SK-N-SH (cell line): ENCODE measurements at regions of chr1 and their contacts with region 1.

Region 1: DNA sequence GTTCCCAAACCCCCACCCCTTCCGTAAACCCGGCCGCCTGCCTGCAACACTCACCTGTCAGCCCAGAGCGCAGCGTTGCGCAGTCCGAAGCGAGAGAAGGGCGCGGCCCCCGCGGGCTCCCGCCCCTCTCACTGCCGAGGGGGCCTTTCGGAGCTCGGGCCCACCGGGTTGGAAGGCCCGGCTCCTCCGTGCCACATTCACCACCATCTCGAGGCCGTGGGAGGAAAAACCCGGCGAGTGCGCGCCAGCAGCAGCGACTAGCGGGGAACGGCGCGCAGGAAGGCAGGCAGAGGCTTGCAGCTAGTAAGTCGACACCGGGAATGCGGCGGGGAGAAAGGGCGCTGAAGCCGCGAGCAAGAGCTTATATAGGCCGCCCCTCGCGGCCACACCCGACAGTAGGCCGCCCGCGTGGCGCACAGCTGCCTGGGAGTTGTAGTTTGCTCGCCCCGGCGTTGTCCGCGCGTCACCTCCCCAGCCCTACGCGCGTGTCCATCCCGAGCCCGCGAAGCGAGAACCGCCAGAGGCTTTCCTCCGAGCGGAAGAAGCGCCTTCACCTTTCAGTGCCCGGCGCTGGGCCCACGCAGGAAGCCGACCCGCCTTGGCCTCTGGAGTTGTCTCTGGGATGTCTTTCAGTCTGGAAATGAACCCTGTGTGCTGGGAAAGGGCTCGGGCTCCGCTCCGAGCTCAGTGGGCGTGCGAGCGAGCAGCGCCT is 10.4 kb upstream of the RAB42 start:
- DNase-seq: peak; percentile 98
- H3K4me3 ChIP-seq: peak overlapping the region; percentile 77 to 100
- H3K27ac ChIP-seq: peak overlapping the region; percentile 69 to 75
- H3K4me1 ChIP-seq: peaks cover 11 to 13% of the 10 kb centered on the region in 2 experiments; a peak in 3 of 4 replicates
- H3K27me3 ChIP-seq: no peaks in the 10 kb centered on the region
- CTCF ChIP-seq: no peak
- EP300 ChIP-seq: peak; percentile 16 to 20; a peak in 1 of 4 replicates
- RAD21 ChIP-seq: no peak

Region 2: GRCh38 chr1:28259307-28260167 is 322.2 kb before region 1 on chr1 and contains the start of gene SESN2:
- CTCF ChIA-PET with region 1: no interaction called
- POLR2A ChIA-PET with region 1: interaction called, 11 read pairs
- DNase-seq: peak; percentile 98
- H3K4me3 ChIP-seq: peak within 1 kb of the TSS; percentile 78 to 96
- H3K27ac ChIP-seq: peak within 1 kb of the TSS; percentile 82 to 83
- H3K4me1 ChIP-seq: peaks cover 12 to 14% of the 10 kb centered on the region in 2 experiments; a peak in 1 of 4 replicates
- H3K27me3 ChIP-seq: no peaks in the 10 kb centered on the region
- CTCF ChIP-seq: no peak
- EP300 ChIP-seq: no peak
- RAD21 ChIP-seq: no peak
- polyA plus RNA-seq, gene SESN2: 14.1 and 15.4 TPM in 2 replicates

Region 3: GRCh38 chr1:28428012-28428411 is 153.7 kb before region 1 on chr1:
- CTCF ChIA-PET with region 1: no interaction called
- POLR2A ChIA-PET with region 1: no interaction called
- DNase-seq: no peak
- H3K4me3 ChIP-seq: no peak overlapping the region
- H3K27ac ChIP-seq: no peak overlapping the region
- H3K4me1 ChIP-seq: 0 out of 4 replicates have a peak, but pooled peaks cover 0 to under 1% of the 10 kb centered on the region in 2 experiments
- H3K27me3 ChIP-seq: no peaks in the 10 kb centered on the region
- CTCF ChIP-seq: no peak
- EP300 ChIP-seq: no peak
- RAD21 ChIP-seq: no peak

Region 4: DNA sequence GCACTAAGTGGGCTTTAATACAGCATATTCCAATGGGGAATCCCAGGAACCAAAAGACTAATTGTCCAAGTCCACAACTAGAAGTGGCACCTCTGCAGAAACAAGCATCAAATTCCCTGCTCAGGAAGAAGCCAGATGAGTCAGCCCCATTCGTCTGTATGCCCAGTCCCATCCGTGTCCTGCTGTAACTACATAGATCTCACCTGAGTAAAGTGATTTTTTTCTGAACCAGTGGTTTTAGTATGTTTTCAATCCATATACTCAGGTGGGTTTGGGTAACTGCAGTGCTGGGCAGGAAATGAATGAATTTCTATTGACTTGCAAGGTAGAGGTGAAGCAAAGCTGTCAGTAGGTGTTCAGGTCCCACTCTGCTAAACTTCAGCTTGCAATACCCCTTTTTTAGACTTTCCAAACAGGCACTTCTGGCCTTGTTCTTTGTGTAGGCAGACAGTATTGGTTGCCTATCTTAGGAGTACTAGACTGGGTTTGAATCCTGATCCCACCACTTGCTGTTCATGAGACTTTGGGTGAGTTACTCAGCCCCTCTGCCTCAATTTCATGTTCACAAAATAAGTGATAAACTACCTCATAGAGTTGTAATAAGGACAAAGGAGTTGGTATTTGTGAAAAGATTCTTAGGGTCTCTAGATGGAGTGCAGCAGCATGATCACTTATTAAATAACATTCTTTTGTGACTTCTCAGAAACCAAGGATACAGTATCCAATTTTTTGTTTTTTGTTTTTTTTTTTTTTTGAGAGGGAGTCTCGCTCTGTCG is 70.8 kb before region 1 on chr1:
- CTCF ChIA-PET with region 1: interaction called, 3 read pairs
- POLR2A ChIA-PET with region 1: interaction called, 14 read pairs
- DNase-seq: no peak
- H3K4me3 ChIP-seq: peak overlapping the region in 1 of 2 experiments; percentile 26; a peak in 1 of 4 replicates
- H3K27ac ChIP-seq: peak overlapping the region; percentile 34 to 75
- H3K4me1 ChIP-seq: peaks cover 18 to 20% of the 10 kb centered on the region in 2 experiments; a peak in 3 of 4 replicates
- H3K27me3 ChIP-seq: no peaks in the 10 kb centered on the region
- CTCF ChIP-seq: no peak
- EP300 ChIP-seq: no peak
- RAD21 ChIP-seq: no peak

Region 5: GRCh38 chr1:28537457-28538199 is 44.1 kb before region 1 on chr1:
- CTCF ChIA-PET with region 1: no interaction called
- POLR2A ChIA-PET with region 1: interaction called, 14 read pairs
- DNase-seq: peak; percentile 70
- H3K4me3 ChIP-seq: no peak overlapping the region
- H3K27ac ChIP-seq: peak overlapping the region in 1 of 2 experiments; percentile 56; a peak in 2 of 4 replicates
- H3K4me1 ChIP-seq: peaks cover 0 to 14% of the 10 kb centered on the region in 2 experiments; a peak in 1 of 4 replicates
- H3K27me3 ChIP-seq: no peaks in the 10 kb centered on the region
- CTCF ChIP-seq: no peak
- EP300 ChIP-seq: peak in 1 of 2 experiments; percentile 58; a peak in 2 of 4 replicates
- RAD21 ChIP-seq: no peak; the same call in 1 of the 2 replicates

Region 6: DNA sequence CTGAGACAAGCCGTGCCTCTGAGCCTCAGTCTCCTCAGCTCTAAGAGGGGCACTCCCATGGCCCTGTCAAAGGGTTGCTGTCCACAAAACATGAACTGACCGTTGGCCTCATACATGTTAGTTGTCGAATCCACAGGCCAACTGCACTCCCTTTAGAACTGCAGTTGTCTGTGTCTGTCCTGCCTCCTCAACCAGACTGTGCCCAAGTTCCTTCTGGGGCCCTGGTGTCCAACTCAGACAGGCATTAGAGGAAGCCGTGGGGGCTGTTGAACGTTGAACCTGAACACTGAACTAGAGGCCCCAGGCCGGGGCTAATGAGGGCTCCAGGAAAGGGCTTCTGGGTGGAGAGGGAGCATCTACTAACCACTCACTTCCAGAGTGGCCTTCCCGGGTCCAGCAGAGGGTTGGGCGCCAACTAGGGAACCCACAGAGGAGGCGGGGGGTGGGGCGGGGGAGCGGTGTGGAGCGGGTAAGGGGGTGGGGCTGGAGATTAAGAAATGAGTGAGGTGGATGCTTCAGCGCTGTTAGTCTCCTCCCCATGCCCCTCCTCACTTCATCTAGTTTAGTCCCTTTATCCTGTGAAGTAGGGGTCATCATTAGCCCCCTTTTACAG is 10.1 kb after region 1 on chr1 and contains the start of gene RAB42:
- CTCF ChIA-PET with region 1: interaction called, 6 read pairs
- POLR2A ChIA-PET with region 1: interaction called, 36 read pairs
- DNase-seq: peak; percentile 57
- H3K4me3 ChIP-seq: peak within 1 kb of the TSS; percentile 48 to 54
- H3K27ac ChIP-seq: no peak within 1 kb of the TSS
- H3K4me1 ChIP-seq: peaks cover 6 to 12% of the 10 kb centered on the region in 2 experiments; a peak in 2 of 4 replicates
- H3K27me3 ChIP-seq: no peaks in the 10 kb centered on the region
- CTCF ChIP-seq: no peak
- EP300 ChIP-seq: no peak
- RAD21 ChIP-seq: no peak
- polyA plus RNA-seq, gene RAB42: 4.6 and 5.5 TPM in 2 replicates

Region 7: DNA sequence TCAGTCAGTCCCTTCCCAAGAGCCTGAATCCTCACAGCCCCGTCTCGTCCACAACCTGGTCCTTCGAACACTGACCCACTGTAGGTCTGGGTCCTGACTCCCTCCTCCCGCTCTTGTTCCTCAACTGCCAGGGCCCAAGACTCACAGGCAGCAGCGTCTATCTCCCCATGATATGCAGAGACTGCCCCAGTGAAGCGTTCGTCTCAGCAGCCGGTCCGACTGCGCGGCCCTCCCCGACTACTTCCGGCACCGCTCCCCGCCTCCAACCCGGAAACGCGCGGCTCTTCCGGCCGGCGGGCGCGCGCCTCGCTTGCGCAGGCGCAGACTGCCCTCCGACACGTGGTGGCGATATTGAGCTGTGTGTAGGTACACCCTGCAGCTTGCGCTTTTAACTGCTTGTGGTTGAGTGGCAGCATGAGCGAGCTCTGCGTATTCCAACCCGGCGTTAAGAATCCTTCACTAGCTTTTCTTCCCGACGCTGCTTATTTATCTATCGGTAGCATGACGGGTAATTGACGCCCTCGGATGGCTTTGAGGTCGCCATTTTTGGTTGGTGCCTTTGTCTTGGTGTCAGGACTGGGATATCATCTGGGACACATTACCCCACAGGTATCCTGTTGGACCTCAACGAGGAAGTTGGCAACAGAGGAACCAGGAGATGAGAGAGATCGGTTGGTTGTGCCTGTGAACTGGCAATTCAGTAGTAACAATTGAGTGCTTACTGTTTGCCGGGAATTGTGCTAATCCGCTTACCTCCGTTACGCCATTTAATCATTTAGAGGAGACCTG is 61.3 kb after region 1 on chr1 and contains the start of gene TAF12:
- CTCF ChIA-PET with region 1: no interaction called
- POLR2A ChIA-PET with region 1: interaction called, 12 read pairs
- DNase-seq: peak; percentile 93
- H3K4me3 ChIP-seq: peak within 1 kb of the TSS; percentile 68 to 73
- H3K27ac ChIP-seq: peak within 1 kb of the TSS; percentile 82 to 91
- H3K4me1 ChIP-seq: peaks cover 0 to 11% of the 10 kb centered on the region in 2 experiments; a peak in 2 of 4 replicates
- H3K27me3 ChIP-seq: no peaks in the 10 kb centered on the region
- CTCF ChIP-seq: peak; percentile 36
- EP300 ChIP-seq: peak in 1 of 2 experiments; percentile 14; a peak in 1 of 4 replicates
- RAD21 ChIP-seq: peak; percentile 61
- polyA plus RNA-seq, gene TAF12: 34.9 and 44.2 TPM in 2 replicates

Region 8: DNA sequence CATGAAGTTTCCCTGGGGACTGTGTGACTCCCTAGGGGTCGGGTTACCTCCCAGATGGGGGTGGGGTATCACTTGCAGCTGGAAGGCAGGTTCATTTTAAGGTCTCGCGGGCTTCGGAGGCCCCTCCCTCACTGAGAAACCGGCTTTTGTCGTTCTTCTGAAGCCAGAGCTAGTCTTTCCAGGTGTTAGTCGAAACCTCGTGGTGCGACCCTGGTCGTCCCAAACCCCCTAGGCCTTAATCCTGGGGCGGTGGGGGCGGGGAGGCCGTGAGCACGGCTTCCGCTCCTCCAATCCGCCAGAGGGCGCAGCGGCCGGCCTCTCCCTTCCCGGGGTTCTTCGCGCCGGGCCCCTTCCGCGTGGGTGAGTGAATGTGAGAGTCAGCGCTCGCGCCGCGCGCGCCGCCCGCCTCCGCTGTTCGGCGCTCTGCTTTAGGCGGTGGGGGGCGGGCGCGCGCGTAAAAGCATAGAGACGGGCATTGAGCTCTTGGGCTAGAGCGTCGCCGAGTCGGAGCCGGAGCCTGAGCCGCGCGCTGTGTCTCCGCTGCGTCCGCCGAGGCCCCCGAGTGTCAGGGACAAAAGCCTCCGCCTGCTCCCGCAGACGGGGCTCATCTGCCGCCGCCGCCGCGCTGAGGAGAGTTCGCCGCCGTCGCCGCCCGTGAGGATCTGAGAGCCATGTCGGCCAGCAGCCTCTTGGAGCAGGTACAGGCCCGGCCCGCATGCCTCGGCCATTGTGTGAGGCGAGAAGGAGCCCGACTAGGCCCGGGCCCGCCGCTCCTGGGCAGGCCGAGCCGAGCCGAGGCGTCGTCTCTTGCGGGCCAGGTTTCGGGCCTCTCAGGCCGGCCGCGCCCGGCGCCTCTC is 155.0 kb after region 1 on chr1 and contains the start of gene YTHDF2:
- CTCF ChIA-PET with region 1: no interaction called
- POLR2A ChIA-PET with region 1: interaction called, 10 read pairs
- DNase-seq: peak; percentile 95
- H3K4me3 ChIP-seq: peak within 1 kb of the TSS; percentile 77 to 97
- H3K27ac ChIP-seq: peak within 1 kb of the TSS; percentile 88
- H3K4me1 ChIP-seq: peaks cover 14 to 17% of the 10 kb centered on the region in 2 experiments; a peak in 3 of 4 replicates
- H3K27me3 ChIP-seq: no peaks in the 10 kb centered on the region
- CTCF ChIP-seq: peak; percentile 88
- EP300 ChIP-seq: peak; percentile 24 to 47; a peak in 2 of 4 replicates
- RAD21 ChIP-seq: peak; percentile 11; the same call in 1 of the 2 replicates
- polyA plus RNA-seq, gene YTHDF2: 45.2 and 54.8 TPM in 2 replicates